ENCODE measurements at regions of chr10 and their contacts with region 1.

Region 1: DNA sequence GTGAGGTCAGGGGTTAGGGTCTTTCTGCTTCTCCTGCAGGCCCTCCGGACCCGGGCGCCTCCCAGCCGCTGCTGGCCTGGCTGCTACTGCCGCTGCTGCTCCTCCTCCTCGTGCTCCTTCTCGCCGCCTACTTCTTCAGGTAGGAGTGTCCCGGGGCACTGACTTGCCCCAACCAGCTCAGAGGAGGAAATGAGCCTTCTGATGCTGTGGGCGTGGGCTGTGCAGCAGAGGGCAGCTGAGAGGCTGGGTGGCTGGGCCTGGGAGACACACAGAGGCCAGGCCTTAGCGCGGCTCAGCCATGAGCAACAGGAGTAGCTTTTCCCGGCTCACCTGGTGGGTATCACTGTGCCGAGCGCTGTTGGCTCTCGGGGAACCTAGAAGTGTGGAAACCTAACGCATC is 78.9 kb downstream of the MKI67 start:
- DNase-seq: peak; percentile 57 to 84 (median 80)
- ATAC-seq: peak; percentile 96
- H3K4me3 ChIP-seq: peak overlapping the region; percentile 60
- H3K4me3 Mint-ChIP-seq: peak overlapping the region; percentile 88 to 98 (median 96)
- H3K27ac ChIP-seq: peak overlapping the region; percentile 82
- H3K27ac Mint-ChIP-seq: peak overlapping the region; percentile 77 to 98 (median 95)
- H3K4me1 ChIP-seq: peaks cover 28 to 37% of the 10 kb centered on the region in 2 donors
- H3K4me1 Mint-ChIP-seq: peaks cover 13 to 72% (median 52%) of the 10 kb centered on the region in 7 donors
- H3K27me3 ChIP-seq: no peaks in the 10 kb centered on the region
- H3K27me3 Mint-ChIP-seq: no peaks in the 10 kb centered on the region

Region 2: DNA sequence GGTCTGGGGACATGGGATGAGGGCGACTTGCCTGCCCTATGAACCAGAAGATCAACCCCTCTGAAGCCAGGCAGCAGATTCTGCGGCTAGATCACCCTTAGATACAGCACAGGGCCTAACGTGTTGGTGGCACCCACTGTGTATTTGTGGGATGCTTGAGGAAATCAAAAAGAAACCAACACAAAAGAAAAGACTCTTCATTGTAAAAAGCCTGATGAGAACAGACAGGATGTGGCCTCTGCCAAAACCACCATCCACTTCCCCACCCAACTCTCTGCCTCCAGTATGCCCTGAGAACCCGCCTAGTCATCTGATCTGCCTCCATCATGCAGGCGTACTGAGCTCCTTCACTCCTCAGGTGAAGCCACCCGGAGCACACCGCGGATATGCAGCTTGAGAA is 753.7 kb before region 1 on chr10:
- CTCF ChIA-PET with region 1: no interaction called
- POLR2A ChIA-PET with region 1: no interaction called
- intact Hi-C with region 1: loop called in 1 of 2 experiments (anchors 10 kb)
- DNase-seq: peak; percentile 16 to 88 (median 79)
- ATAC-seq: peak; percentile 93
- H3K4me3 ChIP-seq: no peak overlapping the region
- H3K4me3 Mint-ChIP-seq: peak overlapping the region; percentile 49 to 79 (median 65)
- H3K27ac ChIP-seq: no peak overlapping the region
- H3K27ac Mint-ChIP-seq: peak overlapping the region; percentile 3 to 76 (median 63)
- H3K4me1 ChIP-seq: peaks cover 7 to 33% of the 10 kb centered on the region in 2 donors
- H3K4me1 Mint-ChIP-seq: peaks cover 25 to 62% (median 40%) of the 10 kb centered on the region in 7 donors
- H3K27me3 ChIP-seq: peaks cover 0 to 5% of the 10 kb centered on the region in 2 donors
- H3K27me3 Mint-ChIP-seq: peaks cover 23 to 66% (median 31%) of the 10 kb centered on the region in 5 donors

Region 3: DNA sequence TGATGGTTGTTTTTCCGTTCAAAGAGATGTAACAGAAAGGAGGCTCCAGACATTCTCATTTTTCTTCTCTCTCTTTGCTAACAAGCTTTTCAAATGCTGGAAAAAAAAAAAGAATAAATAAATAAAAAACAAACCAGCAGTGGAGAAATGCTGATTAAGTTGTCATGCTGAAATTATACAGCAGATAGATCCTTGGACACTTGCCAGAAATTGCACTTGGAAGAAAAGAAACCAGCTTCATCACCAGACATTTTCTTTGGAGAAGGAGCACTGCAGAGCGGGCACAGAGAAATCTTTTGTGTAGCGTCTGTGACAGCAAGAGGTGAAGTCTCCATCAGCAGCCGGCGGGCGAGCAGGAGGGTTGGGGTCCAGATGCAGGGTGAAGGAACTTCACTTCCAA is 210.4 kb before region 1 on chr10:
- CTCF ChIA-PET with region 1: no interaction called
- POLR2A ChIA-PET with region 1: no interaction called
- intact Hi-C with region 1: no loop called
- DNase-seq: no peak
- ATAC-seq: no peak
- H3K4me3 ChIP-seq: no peak overlapping the region
- H3K4me3 Mint-ChIP-seq: no peak overlapping the region
- H3K27ac ChIP-seq: no peak overlapping the region
- H3K27ac Mint-ChIP-seq: no peak overlapping the region
- H3K4me1 ChIP-seq: no peaks in the 10 kb centered on the region
- H3K4me1 Mint-ChIP-seq: no peaks in the 10 kb centered on the region
- H3K27me3 ChIP-seq: no peaks in the 10 kb centered on the region
- H3K27me3 Mint-ChIP-seq: peaks cover 3 to 24% (median 12%) of the 10 kb centered on the region in 5 donors

Region 4: GRCh38 chr10:128011175-128011979 is 36.0 kb before region 1 on chr10:
- CTCF ChIA-PET with region 1: no interaction called
- POLR2A ChIA-PET with region 1: no interaction called
- intact Hi-C with region 1: loop called in 1 of 2 experiments (anchors 1 kb)
- DNase-seq: peak; percentile 72 to 97 (median 88)
- ATAC-seq: peak; percentile 100
- H3K4me3 ChIP-seq: no peak overlapping the region
- H3K4me3 Mint-ChIP-seq: peak overlapping the region in 8 of 10 donors; percentile 2 to 62 (median 31)
- H3K27ac ChIP-seq: no peak overlapping the region
- H3K27ac Mint-ChIP-seq: peak overlapping the region in 3 of 9 donors; percentile 27 to 62 (median 48)
- H3K4me1 ChIP-seq: no peaks in the 10 kb centered on the region
- H3K4me1 Mint-ChIP-seq: peaks cover 0 to 8% (median 6%) of the 10 kb centered on the region in 7 donors
- H3K27me3 ChIP-seq: no peaks in the 10 kb centered on the region
- H3K27me3 Mint-ChIP-seq: peaks cover 0 to 5% (median 0%) of the 10 kb centered on the region in 5 donors

Region 5: DNA sequence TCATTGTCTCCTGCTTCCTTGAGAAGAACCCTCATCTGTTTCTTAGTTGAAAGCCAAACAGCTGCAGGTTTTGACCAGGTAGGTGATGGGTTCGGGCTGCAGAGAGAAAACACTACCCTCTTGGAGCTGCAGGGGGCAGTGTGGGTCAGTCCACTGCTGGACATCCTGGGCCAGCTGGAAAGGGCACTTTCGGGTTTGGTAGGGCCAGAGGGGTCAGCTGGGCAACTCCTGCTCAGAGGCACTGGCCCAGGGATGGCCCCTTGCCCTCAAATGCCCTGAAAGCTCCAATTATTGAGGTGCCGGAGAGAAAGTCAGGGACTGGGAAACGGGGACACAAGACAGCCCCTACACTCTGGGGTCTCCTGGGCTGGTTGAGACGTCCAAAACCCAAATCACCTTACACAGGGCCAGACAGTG is 11.8 kb before region 1 on chr10:
- CTCF ChIA-PET with region 1: interaction called, 18 read pairs
- POLR2A ChIA-PET with region 1: interaction called, 7 read pairs
- intact Hi-C with region 1: no loop called
- DNase-seq: peak in 8 of 9 donors; percentile 33 to 69 (median 50)
- ATAC-seq: peak; percentile 94
- H3K4me3 ChIP-seq: no peak overlapping the region
- H3K4me3 Mint-ChIP-seq: no peak overlapping the region
- H3K27ac ChIP-seq: no peak overlapping the region
- H3K27ac Mint-ChIP-seq: no peak overlapping the region
- H3K4me1 ChIP-seq: no peaks in the 10 kb centered on the region
- H3K4me1 Mint-ChIP-seq: peaks cover 0 to 10% (median 0%) of the 10 kb centered on the region in 7 donors
- H3K27me3 ChIP-seq: no peaks in the 10 kb centered on the region
- H3K27me3 Mint-ChIP-seq: peaks cover 0 to 9% (median 0%) of the 10 kb centered on the region in 5 donors

Region 6: DNA sequence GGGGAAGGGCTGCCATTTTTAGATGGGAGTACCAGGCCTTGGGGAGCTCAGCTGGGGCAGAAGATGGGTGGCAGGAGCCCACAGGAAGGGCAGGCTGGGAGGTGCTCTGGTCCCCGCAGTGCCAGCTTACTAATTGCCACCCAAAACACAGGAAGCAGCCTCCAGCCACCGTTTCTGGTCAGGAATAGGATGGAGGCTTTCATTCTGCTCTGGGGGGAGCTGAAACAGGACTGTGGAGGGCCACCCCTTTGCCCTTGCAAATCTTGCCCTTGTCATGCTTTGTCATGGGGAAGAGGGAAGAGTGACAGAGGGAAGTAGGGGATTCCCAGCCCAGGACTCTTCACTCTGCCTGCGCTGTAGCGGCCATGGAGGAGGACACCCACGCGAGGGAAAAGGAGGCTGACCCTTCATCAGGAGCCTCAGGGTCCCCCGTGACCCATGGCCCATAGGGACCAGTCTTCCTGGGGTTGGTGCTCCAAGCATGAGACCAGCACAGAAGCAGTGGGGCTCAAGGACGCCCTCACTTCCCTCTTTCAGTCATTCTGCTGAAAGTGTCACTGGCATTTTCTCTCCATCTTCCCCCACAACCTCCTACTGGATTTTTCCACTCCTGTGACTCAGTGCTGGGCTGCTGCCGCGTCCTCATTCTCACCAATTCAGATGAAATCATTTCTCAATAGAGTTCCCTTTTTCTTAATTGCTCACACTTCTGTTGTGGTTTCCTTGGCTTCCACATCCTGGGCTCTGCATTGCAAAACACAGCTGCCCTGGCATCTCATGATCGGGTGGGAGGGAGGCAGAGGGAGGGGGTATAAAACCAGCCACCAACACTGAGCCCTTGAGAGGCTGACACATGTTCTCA is 17.0 kb after region 1 on chr10:
- CTCF ChIA-PET with region 1: interaction called, 17 read pairs
- POLR2A ChIA-PET with region 1: interaction called, 78 read pairs
- intact Hi-C with region 1: loop called (anchors 1 kb)
- DNase-seq: peak in 8 of 9 donors; percentile 52 to 77 (median 67)
- ATAC-seq: peak; percentile 71
- H3K4me3 ChIP-seq: peak overlapping the region; percentile 52
- H3K4me3 Mint-ChIP-seq: peak overlapping the region; percentile 75 to 96 (median 86)
- H3K27ac ChIP-seq: peak overlapping the region; percentile 61
- H3K27ac Mint-ChIP-seq: peak overlapping the region; percentile 72 to 93 (median 87)
- H3K4me1 ChIP-seq: peaks cover 42 to 53% of the 10 kb centered on the region in 2 donors
- H3K4me1 Mint-ChIP-seq: peaks cover 50 to 87% (median 76%) of the 10 kb centered on the region in 7 donors
- H3K27me3 ChIP-seq: no peaks in the 10 kb centered on the region
- H3K27me3 Mint-ChIP-seq: no peaks in the 10 kb centered on the region

Region 7: GRCh38 chr10:129466703-129467358 is 1419.5 kb after region 1 on chr10 and contains the start of gene MGMT:
- CTCF ChIA-PET with region 1: no interaction called
- POLR2A ChIA-PET with region 1: no interaction called
- intact Hi-C with region 1: loop called in 1 of 2 experiments (anchors 5 kb)
- DNase-seq: peak; percentile 91 to 98 (median 96)
- ATAC-seq: peak; percentile 99
- H3K4me3 ChIP-seq: peak within 1 kb of the TSS; percentile 74
- H3K4me3 Mint-ChIP-seq: peak within 1 kb of the TSS; percentile 74 to 90 (median 87)
- H3K27ac ChIP-seq: peak within 1 kb of the TSS; percentile 85
- H3K27ac Mint-ChIP-seq: peak within 1 kb of the TSS; percentile 71 to 91 (median 84)
- H3K4me1 ChIP-seq: peaks cover 11 to 13% of the 10 kb centered on the region in 2 donors
- H3K4me1 Mint-ChIP-seq: peaks cover 8 to 31% (median 26%) of the 10 kb centered on the region in 7 donors
- H3K27me3 ChIP-seq: no peaks in the 10 kb centered on the region
- H3K27me3 Mint-ChIP-seq: no peaks in the 10 kb centered on the region
- total RNA-seq, gene MGMT: 17.6 to 23.9 (median 21.8) TPM